Activated CD8-positive, alpha-beta T cell treated with anti-CD3 and anti-CD28 coated beads for 36 hours (primary cell): ENCODE measurements at regions of chr7 and their contacts with region 1.

Region 1: GRCh38 chr7:76314042-76314721 is 11.7 kb downstream of the HSPB1 start:
- DNase-seq: peak; percentile 99
- ATAC-seq: peak; percentile 65
- H3K4me3 Mint-ChIP-seq: no peak overlapping the region
- H3K27ac Mint-ChIP-seq: peak overlapping the region; percentile 80
- H3K4me1 Mint-ChIP-seq: peaks cover 20% of the 10 kb centered on the region
- H3K27me3 Mint-ChIP-seq: no peaks in the 10 kb centered on the region
- CTCF ChIP-seq: peak; percentile 99

Region 2: DNA sequence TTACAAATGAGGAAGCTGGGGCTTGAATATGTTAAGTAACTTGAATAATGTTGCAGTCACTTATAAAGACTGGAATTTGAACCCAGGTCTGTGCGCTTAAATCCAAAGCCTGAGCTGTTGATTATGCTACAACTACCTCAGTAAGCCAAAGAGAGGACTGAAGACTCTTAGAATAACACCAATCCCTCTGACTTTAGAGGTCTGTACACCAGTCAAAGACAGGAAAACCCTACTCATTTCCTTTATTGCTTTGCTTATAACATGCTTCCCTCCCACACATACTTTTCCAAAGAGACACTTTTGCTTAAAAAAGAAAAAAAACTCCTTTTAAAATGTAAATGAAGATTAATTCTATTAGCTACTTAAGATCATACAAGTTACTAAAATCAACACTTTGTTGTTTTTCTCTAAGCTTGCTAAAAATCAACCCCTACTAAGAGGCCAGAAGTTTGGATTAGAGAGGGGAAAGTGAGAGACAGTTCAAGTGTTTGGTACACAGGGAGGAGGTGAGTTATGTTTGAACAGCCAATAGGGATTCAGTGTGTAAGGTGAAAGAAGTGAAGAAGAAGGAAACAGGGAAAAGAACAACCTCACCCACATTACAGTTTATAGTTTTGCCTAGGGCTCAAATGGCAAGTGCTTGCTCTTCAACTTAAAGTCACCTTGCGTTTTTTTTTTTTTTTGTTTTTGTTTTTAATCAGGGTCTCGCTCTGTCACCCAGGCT is 191.5 kb before region 1 on chr7:
- CTCF ChIA-PET with region 1: no interaction called
- POLR2A ChIA-PET with region 1: no interaction called
- intact Hi-C with region 1: no loop called
- DNase-seq: no peak
- ATAC-seq: no peak
- H3K4me3 Mint-ChIP-seq: no peak overlapping the region
- H3K27ac Mint-ChIP-seq: no peak overlapping the region
- H3K4me1 Mint-ChIP-seq: peaks cover 9% of the 10 kb centered on the region
- H3K27me3 Mint-ChIP-seq: no peaks in the 10 kb centered on the region
- CTCF ChIP-seq: no peak

Region 3: GRCh38 chr7:76179686-76180085 is 134.5 kb before region 1 on chr7:
- CTCF ChIA-PET with region 1: interaction called, 61 read pairs
- POLR2A ChIA-PET with region 1: interaction called, 4 read pairs
- intact Hi-C with region 1: loop called (anchors 2 kb)
- DNase-seq: no peak
- ATAC-seq: no peak
- H3K4me3 Mint-ChIP-seq: no peak overlapping the region
- H3K27ac Mint-ChIP-seq: no peak overlapping the region
- H3K4me1 Mint-ChIP-seq: no peaks in the 10 kb centered on the region
- H3K27me3 Mint-ChIP-seq: no peaks in the 10 kb centered on the region
- CTCF ChIP-seq: no peak

Region 4: DNA sequence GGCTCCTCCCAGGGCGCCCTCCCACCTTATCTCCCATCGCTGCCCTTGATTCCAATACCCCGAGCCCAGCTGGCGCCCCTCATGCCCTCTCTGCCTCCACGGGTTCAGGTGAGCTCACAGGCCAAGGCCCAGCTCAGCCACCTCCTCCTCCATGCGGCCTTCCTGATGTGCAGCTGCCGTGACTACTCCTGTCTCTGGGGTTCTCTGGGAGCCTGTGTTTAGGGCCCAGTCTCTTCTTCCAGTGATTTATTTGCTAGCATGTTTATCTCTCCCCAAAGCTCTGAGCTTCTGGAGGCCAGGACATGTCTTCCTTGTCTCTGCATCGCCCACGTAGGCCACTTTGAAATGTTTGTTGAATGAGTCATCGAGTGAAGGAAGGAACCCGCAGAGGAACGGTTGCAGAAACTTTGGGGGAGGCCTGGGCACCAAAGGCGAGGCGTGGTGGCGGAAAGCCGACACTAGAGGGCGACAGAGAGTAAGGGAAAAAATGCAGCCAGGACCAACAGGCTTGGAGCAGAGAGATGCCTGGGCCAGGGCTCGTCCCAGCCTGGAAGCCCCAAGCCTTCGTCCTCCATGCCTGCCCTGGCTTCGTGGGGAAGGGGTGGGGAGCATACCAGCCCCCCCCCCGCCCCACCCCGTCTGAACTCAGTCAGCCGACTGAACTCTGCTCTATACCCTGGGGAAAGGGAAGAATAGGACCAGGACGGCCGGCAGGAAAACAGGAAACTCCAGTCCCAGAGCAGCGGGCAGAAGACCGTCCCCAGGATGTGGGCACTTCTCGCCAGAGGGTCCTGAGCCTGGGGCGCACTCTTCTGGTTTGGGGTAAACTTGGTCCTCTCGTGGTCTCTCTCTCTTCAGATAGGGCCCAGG is 22.6 kb before region 1 on chr7:
- CTCF ChIA-PET with region 1: interaction called, 78 read pairs
- POLR2A ChIA-PET with region 1: interaction called, 5 read pairs
- intact Hi-C with region 1: no loop called
- DNase-seq: peak; percentile 95
- ATAC-seq: peak; percentile 94
- H3K4me3 Mint-ChIP-seq: peak overlapping the region; percentile 31
- H3K27ac Mint-ChIP-seq: peak overlapping the region; percentile 81
- H3K4me1 Mint-ChIP-seq: peaks cover 13% of the 10 kb centered on the region
- H3K27me3 Mint-ChIP-seq: no peaks in the 10 kb centered on the region
- CTCF ChIP-seq: peak; percentile 96

Region 5: DNA sequence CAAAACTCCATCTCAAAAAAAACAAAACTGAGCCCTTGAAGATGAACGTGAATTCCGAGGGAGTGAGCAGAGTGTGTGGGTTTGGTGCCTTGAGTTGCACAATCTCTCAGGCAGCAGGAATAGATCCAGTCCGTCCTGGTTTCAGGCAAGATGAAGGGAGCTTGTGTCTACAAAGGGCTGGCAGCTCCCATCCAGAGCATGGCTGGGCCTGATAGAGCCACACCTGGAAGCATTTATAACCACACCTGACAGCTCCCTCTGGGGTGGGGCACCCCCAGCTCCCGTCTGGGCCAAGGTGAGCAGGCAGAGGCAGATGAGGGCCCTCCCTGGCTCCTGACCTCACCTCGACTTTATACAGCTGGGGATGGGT is 16.8 kb before region 1 on chr7:
- CTCF ChIA-PET with region 1: interaction called, 78 read pairs
- POLR2A ChIA-PET with region 1: interaction called, 5 read pairs
- intact Hi-C with region 1: no loop called
- DNase-seq: no peak
- ATAC-seq: no peak
- H3K4me3 Mint-ChIP-seq: no peak overlapping the region
- H3K27ac Mint-ChIP-seq: no peak overlapping the region
- H3K4me1 Mint-ChIP-seq: peaks cover 4% of the 10 kb centered on the region
- H3K27me3 Mint-ChIP-seq: peaks cover 3% of the 10 kb centered on the region
- CTCF ChIP-seq: no peak

Region 6: DNA sequence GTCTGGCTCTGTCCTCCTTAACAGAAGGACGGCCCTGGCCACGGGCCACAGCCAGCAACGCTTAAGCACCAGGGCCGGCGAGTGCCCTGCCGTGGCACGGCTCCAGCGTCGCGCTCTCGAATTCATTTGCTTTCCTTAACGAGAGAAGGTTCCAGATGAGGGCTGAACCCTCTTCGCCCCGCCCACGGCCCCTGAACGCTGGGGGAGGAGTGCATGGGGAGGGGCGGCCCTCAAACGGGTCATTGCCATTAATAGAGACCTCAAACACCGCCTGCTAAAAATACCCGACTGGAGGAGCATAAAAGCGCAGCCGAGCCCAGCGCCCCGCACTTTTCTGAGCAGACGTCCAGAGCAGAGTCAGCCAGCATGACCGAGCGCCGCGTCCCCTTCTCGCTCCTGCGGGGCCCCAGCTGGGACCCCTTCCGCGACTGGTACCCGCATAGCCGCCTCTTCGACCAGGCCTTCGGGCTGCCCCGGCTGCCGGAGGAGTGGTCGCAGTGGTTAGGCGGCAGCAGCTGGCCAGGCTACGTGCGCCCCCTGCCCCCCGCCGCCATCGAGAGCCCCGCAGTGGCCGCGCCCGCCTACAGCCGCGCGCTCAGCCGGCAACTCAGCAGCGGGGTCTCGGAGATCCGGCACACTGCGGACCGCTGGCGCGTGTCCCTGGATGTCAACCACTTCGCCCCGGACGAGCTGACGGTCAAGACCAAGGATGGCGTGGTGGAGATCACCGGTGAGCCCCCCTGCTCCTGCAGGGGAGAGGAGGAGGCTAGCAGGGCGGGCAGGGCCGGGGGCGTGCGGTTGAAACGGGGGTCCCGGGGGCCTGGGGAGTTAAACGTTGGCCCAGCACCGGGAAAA is 11.6 kb before region 1 on chr7 and contains the start of gene HSPB1:
- CTCF ChIA-PET with region 1: interaction called, 55 read pairs
- POLR2A ChIA-PET with region 1: interaction called, 4 read pairs
- intact Hi-C with region 1: no loop called
- DNase-seq: peak; percentile 74
- ATAC-seq: peak; percentile 52
- H3K4me3 Mint-ChIP-seq: peak within 1 kb of the TSS; percentile 92
- H3K27ac Mint-ChIP-seq: peak within 1 kb of the TSS; percentile 94
- H3K4me1 Mint-ChIP-seq: peaks cover 15% of the 10 kb centered on the region
- H3K27me3 Mint-ChIP-seq: peaks cover 4% of the 10 kb centered on the region
- CTCF ChIP-seq: no peak
- total RNA-seq, gene HSPB1: 104 to 109 TPM

Region 7: DNA sequence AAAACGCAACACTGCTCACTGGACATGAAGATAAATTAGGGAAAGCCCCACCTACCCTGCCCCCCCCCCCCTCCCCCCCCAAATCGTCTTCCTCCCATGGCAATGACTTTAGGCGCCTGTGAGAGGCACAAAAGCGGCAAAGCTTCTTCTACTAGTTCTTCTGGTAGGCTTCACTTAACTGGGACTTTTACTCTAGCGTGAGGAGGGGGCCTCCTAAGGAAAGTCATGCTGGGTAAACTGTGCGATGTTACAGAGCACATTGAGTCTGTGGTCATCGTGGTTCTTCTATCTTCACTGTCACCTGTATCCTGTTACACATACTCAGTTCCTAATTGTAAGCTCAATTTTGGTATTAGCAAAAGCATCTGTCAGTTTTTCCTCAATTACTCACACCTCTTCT is 13.4 kb after region 1 on chr7:
- CTCF ChIA-PET with region 1: interaction called, 19 read pairs
- POLR2A ChIA-PET with region 1: interaction called, 4 read pairs
- intact Hi-C with region 1: no loop called
- DNase-seq: no peak
- ATAC-seq: peak; percentile 71
- H3K4me3 Mint-ChIP-seq: no peak overlapping the region
- H3K27ac Mint-ChIP-seq: peak overlapping the region; percentile 68
- H3K4me1 Mint-ChIP-seq: peaks cover 30% of the 10 kb centered on the region
- H3K27me3 Mint-ChIP-seq: no peaks in the 10 kb centered on the region
- CTCF ChIP-seq: no peak